HEK293 (cell line): ENCODE measurements at regions of chr22 and their contacts with region 1.

Region 1: DNA sequence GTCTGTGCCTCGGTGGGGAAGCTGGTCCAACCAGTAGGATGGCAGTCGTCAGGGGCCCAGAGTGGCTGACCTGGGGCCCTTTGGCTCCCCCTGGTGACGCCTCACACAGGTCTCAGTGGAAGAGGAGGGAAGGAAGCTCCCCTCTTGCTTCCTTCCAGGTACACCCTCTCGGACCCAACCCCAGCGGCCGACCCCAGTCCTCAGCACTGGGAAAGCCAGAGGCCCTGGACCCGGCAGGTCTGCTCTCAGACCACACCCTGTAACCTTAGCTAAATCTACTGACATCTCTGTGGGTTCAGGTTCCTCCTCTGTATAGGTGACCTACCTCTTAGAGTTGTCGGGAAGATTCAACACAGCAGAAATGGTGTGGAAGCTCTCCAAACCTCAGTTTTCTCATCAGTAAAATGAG is 3.4 kb upstream of the SCUBE1 start:
- H3K4me3 ChIP-seq: no peak overlapping the region
- H3K27ac ChIP-seq: no peak overlapping the region
- H3K4me1 ChIP-seq: no peaks in the 10 kb centered on the region; the same call in 1 of the 2 replicates
- CTCF ChIP-seq: peak; percentile 84

Region 2: GRCh38 chr22:43213051-43213450 is 133.5 kb before region 1 on chr22:
- CTCF ChIA-PET with region 1: no interaction called
- POLR2A ChIA-PET with region 1: no interaction called
- H3K4me3 ChIP-seq: no peak overlapping the region
- H3K27ac ChIP-seq: no peak overlapping the region
- H3K4me1 ChIP-seq: no peaks in the 10 kb centered on the region
- CTCF ChIP-seq: no peak

Region 3: DNA sequence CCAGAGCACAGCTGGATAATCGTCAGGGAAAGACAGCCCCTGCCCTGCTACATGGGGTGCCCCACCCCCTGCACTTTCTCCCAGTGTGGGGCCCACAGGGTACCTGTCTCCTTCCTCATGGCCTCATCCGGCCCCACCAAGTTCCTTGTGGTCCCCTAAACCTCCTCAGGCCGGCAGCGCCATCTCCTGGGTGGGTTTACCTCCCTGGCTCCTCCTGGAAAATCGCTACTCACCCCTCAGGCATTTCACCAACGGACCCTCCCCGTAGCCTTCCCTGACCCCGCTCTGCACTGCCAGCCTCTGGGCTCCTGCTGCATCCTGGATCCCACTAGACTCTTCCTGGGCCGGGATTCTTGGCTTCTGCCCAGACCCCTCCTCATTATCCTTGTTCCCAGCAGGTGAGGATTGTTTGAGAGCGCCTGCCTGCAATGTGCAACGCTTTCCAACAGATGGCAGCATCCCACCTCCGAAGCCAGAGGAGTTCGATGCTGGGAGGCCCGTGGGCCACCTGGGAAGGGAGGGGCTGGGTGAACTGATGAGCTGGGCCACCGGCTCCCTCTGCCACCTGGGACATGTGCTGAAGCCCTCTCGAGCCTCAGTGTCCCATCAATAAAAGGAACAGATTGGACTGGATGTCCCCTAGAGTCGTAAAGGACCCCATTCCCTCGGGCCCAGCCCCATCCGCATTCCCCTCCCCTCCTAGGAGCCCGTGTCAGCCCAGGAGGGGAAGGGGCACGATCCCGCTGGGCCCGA is 115.4 kb before region 1 on chr22:
- CTCF ChIA-PET with region 1: interaction called, 130 read pairs
- POLR2A ChIA-PET with region 1: interaction called, 3 read pairs
- H3K4me3 ChIP-seq: no peak overlapping the region
- H3K27ac ChIP-seq: no peak overlapping the region
- H3K4me1 ChIP-seq: no peaks in the 10 kb centered on the region
- CTCF ChIP-seq: peak; percentile 94

Region 4: DNA sequence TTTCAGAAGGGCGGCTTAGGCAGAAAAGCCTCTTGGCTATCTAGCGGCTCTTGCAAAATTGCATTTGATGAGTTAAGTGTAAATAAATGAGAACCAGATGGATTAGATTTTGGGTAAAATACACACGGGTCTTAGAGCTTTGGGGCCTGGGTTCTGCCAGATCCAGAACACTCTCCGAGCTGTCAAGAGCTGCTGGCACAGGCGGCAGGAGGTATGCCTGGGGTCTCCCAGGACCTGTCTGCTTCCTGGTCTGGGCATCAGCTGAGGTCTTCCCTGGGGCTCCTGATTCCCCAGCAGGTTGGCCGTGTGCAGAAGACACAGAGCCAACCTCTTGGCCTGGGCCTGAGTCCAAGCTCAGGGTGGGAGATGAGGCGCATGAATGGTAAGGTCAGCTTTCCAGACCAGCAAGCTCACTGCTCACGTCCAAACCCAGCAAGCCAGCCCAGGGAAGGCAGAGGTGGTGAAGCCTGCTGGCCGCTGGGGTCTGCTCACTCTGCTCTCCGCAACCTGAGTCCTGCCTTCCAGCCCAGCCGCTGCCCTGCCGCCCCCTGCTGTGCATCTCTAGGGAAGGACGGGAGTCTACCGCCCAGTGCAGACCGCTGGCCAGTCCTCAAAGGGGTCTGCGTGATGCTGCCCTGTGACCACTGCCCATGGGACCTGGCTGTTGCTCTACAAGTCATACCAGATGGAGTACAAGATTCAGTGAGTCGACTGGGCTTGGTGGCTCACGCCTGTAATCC is 48.3 kb before region 1 on chr22:
- CTCF ChIA-PET with region 1: interaction called, 13 read pairs
- POLR2A ChIA-PET with region 1: no interaction called
- H3K4me3 ChIP-seq: no peak overlapping the region
- H3K27ac ChIP-seq: no peak overlapping the region
- H3K4me1 ChIP-seq: no peaks in the 10 kb centered on the region
- CTCF ChIP-seq: 0 out of 2 replicates have a peak, but pooled peaks have one; percentile 11

Region 5: GRCh38 chr22:43330178-43331068 is 16.1 kb before region 1 on chr22:
- CTCF ChIA-PET with region 1: interaction called, 40 read pairs
- POLR2A ChIA-PET with region 1: no interaction called
- H3K4me3 ChIP-seq: no peak overlapping the region
- H3K27ac ChIP-seq: no peak overlapping the region
- H3K4me1 ChIP-seq: no peaks in the 10 kb centered on the region
- CTCF ChIP-seq: no peak

Region 6: DNA sequence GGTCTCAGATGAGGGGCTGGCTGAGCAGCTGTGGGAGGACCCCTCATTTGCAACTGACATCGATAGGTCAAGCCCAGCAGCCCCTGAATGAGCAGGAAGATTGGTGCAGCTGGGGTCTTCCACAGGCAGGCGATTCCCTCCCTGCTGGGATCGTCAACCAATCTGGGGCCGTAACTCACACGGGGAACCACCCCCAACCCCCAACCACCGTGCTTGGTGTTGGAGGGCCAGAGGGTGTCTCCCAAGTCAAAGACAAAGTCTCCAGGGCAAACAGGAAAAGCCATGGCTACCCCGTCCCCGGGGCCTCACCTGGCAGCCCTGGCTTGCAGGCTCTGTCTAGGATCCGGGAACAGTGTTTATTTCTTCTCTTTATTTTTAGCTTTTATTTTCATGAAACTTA is 23.5 kb after region 1 on chr22:
- CTCF ChIA-PET with region 1: interaction called, 32 read pairs
- POLR2A ChIA-PET with region 1: no interaction called
- H3K4me3 ChIP-seq: no peak overlapping the region
- H3K27ac ChIP-seq: no peak overlapping the region
- H3K4me1 ChIP-seq: no peaks in the 10 kb centered on the region
- CTCF ChIP-seq: no peak